Activated B cell treated with CpG ODN at 0.5 μM for 24 hours (primary cell): ENCODE measurements at regions of chr7 and their contacts with region 1.

Region 1: GRCh38 chr7:157273208-157274093 is 63.4 kb upstream of the DNAJB6 start:
- DNase-seq: peak; percentile 61
- ATAC-seq: peak; percentile 96
- H3K4me3 Mint-ChIP-seq: no peak overlapping the region
- H3K27ac Mint-ChIP-seq: no peak overlapping the region
- H3K4me1 Mint-ChIP-seq: peaks cover 5% of the 10 kb centered on the region
- H3K27me3 Mint-ChIP-seq: peaks cover 2% of the 10 kb centered on the region
- CTCF ChIP-seq: peak; percentile 42

Region 2: DNA sequence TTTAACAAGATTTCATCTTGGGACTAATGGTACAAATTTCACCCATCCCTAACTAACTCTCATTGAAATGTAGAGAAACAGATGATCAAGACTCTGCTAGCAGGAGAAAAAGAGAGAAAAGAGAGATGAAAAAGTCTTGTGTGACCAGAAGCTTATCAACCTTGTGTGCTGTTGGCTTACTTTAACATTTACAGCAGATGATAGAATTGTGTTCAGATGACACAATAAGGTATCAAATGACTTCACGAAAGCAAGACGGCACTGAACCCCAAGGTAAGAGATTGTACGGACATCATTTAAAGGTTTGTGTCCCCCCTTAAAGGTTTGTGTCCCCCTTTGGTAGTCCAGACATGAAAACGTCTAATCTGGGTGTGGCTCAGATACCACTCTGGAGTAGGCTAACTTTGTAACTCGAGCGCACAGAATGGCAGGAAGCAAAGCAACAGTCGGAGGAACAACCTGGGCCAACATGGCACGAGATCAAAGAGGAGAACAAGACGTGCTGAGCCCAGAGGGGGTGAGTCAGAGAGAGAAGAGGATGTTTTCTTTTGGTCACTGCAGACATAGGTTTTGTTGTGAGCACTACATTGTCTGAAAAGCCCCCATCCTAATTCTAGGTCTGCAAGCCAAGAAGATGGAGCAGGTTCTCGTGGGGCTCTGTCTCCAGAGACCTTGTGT is 370.1 kb before region 1 on chr7:
- CTCF ChIA-PET with region 1: no interaction called
- POLR2A ChIA-PET with region 1: no interaction called
- intact Hi-C with region 1: loop called (anchors 10 kb)
- DNase-seq: no peak
- ATAC-seq: no peak
- H3K4me3 Mint-ChIP-seq: no peak overlapping the region
- H3K27ac Mint-ChIP-seq: no peak overlapping the region
- H3K4me1 Mint-ChIP-seq: no peaks in the 10 kb centered on the region
- H3K27me3 Mint-ChIP-seq: peaks cover 3% of the 10 kb centered on the region
- CTCF ChIP-seq: no peak

Region 3: GRCh38 chr7:157299613-157300368 is 26.3 kb after region 1 on chr7:
- CTCF ChIA-PET with region 1: interaction called, 3 read pairs
- POLR2A ChIA-PET with region 1: no interaction called
- intact Hi-C with region 1: loop called (anchors 1 kb)
- DNase-seq: no peak
- ATAC-seq: no peak
- H3K4me3 Mint-ChIP-seq: no peak overlapping the region
- H3K27ac Mint-ChIP-seq: no peak overlapping the region
- H3K4me1 Mint-ChIP-seq: peaks cover 19% of the 10 kb centered on the region
- H3K27me3 Mint-ChIP-seq: peaks cover 2% of the 10 kb centered on the region
- CTCF ChIP-seq: no peak